ENCODE measurements at regions of chr19 and their contacts with region 1.

Region 1: DNA sequence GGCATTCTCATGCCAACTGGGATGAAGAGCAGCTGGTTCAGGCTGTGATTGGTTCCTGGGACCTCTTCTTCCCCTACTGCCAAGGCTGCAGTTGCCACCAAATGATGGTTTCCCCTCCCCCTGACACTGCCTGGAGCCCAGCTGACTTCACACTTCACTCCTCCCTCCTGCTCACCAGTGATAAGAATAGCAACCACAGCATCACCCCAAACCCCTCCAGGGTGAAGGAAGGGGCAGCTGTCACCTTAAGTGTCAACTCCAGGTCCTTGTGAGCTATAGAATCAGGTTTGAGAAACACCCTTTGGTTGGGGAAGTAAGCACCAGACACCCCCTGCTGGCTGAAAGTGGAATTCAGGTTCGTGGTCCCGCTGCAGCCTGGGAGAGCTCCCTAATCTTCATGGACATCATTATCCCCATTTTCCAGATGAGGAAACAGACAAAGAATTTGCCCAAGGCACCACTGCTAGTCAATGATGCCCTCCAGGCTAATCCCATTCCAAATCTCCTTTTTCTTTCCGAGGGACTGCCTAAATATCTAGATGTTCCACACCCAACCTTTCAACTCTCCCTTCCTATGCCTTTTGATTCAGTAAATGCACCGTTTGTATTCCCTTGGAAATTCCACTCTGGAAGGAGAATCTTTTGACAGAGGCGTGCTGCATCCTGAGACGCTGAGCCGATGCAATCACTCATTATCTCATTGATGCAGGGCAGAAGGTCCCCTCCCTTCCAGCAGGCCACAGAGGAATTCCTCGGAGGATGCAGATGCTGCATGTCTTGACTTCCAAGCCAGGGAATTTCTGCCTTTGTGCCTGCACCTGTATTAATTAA is 50.6 kb upstream of the UQCRFS1 start:
- DNase-seq: peak; percentile 31 to 90
- H3K4me3 ChIP-seq: no peak overlapping the region
- CTCF ChIP-seq: no peak
- POLR2A ChIP-seq: no peak

Region 2: DNA sequence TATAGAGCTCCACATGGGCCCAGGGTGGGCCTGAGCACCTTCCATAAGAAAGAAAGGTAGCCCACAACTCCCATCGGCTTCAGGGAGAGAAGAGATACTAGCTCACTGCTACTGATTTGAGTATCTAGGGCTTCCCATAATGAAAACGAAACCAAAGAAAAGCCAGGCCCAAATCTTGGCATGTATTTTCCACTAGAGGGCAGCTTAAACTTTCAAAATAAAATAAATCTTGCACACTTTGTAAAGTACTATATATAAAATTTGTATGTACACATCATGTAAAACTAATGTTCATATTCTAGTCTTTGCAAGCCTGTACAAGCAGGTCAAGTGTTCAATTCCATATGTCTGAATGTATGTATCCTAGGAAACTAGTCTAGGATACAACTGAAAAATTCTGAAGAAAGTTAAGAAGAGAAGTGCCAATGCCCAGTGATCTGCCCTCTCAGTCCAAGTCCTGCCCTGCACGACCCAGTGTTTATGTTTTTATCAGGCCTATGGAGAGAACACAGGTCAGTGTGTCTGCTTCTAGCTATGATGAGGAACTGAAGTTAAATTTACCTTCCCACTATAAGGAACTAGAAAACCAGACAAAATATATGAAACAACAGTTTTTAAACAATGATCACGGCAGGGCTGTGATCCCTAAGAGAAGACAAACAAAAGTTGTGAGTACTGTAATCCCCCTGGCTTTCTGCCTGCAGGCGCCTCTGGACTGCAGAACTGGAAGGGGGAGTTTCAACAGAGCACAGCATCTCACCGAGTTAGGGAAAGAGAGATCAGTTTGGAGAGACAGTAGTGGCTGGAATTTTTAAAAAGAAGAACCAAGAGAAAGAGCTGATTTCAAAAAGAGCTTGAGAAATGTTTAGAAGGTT is 526.3 kb before region 1 on chr19:
- intact Hi-C with region 1: loop called (anchors 10 kb)
- DNase-seq: no peak
- H3K4me3 ChIP-seq: no peak overlapping the region
- CTCF ChIP-seq: no peak
- POLR2A ChIP-seq: no peak

Region 3: DNA sequence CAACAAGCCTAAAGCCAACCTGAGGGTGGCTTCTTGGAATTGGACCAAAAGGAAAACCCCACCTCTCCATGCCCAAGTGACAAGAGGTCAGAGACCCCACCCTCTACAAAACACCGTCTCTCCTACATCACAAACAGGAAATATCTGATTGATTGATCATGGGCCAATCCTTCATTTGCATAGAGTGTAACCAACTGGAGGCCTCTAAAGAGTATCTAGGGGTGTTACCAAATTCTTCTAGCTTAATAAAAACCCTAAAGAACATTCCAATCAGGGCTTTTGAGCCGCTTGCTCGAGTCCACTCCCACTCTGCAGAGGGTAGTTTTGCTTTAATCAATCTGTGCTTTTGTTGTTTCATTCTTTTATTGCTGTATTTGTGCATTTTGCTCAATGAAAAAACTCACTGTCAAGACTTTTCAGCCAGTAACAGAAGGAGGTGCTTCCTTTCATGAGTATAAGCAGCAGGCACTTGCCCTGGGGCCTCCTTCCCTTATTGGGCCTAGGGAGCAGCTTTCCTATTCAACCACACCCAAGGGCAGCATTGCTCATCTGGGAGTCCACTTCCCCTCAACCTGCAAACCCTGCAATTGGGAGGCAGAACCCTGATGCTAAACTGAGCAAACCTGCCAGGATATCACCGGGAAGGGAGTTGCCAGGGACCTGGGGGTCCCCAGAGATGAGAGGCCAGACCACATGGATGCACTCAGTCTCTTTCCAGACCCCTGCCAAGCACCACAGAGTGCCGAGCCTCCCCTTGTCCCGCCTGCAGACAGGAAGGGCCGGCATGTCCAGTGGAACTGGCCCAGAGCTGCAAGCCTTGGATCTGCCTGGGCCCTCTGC is 108.0 kb after region 1 on chr19:
- intact Hi-C with region 1: no loop called
- DNase-seq: peak; percentile 6 to 37
- H3K4me3 ChIP-seq: no peak overlapping the region
- CTCF ChIP-seq: no peak
- POLR2A ChIP-seq: no peak